ENCODE measurements at regions of chr3 and their contacts with region 1.

Region 1: GRCh38 chr3:17398959-17399551 is 343.4 kb downstream of the TBC1D5 start:
- DNase-seq: no peak
- H3K4me3 ChIP-seq: no peak overlapping the region
- H3K27ac ChIP-seq: no peak overlapping the region
- H3K4me1 ChIP-seq: no peaks in the 10 kb centered on the region
- H3K27me3 ChIP-seq: no peaks in the 10 kb centered on the region
- CTCF ChIP-seq: no peak

Region 2: GRCh38 chr3:17278006-17278405 is 121.0 kb before region 1 on chr3:
- intact Hi-C with region 1: loop called (anchors 10 kb)
- DNase-seq: no peak
- H3K4me3 ChIP-seq: no peak overlapping the region
- H3K27ac ChIP-seq: no peak overlapping the region
- H3K4me1 ChIP-seq: no peaks in the 10 kb centered on the region
- H3K27me3 ChIP-seq: no peaks in the 10 kb centered on the region
- CTCF ChIP-seq: no peak